ENCODE measurements at regions of chr19 and their contacts with region 1.

Region 1: GRCh38 chr19:41462497-41462896 is 19.5 kb downstream of the ERICH4 start:
- DNase-seq: no peak
- H3K4me3 ChIP-seq: no peak overlapping the region
- H3K27ac ChIP-seq: no peak overlapping the region
- H3K4me1 ChIP-seq: no peaks in the 10 kb centered on the region
- H3K27me3 ChIP-seq: no peaks in the 10 kb centered on the region
- CTCF ChIP-seq: no peak
- POLR2A ChIP-seq: no peak

Region 2: DNA sequence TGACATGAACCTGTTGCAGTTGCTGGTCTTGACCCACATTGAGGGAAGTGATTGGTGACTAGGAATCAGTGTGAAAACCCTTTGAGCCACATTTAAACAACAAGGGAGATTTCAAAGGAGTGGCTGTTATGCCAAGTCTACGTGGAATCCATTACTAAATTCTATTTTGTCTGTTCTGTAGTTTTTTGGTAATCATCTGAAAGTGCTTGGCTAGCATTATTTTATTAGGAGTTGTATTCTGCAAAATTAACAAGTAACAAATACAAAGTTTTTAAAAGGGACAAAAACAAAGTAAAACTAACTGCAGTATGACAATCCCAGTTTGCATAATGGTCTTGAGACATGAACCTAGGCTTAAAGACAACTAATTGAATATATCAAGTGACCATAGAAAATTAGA is 1357.7 kb before region 1 on chr19:
- intact Hi-C with region 1: loop called (anchors 5 kb)
- DNase-seq: no peak
- H3K4me3 ChIP-seq: no peak overlapping the region
- H3K27ac ChIP-seq: no peak overlapping the region
- H3K4me1 ChIP-seq: no peaks in the 10 kb centered on the region
- H3K27me3 ChIP-seq: no peaks in the 10 kb centered on the region
- CTCF ChIP-seq: no peak
- POLR2A ChIP-seq: no peak

Region 3: DNA sequence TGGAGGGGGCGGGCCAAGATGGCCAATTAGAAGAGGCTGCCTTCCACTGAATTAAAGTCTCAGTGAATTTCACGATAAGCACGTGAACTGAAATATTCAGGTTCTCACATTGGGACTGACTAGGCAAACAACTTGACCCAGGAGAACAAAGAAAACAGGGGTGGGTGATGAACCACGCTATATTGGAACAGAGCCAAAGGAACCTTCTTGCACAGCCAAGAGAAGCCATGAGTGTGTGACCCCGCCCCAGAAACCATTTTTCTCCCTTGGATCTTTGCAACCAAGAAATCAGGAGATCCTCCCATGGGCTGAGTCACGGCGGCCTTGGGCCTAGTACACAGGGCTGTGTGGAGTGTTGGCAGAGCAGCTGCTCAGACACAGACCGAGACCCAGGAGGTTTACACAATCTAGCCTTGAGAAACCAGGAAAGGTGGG is 17.3 kb after region 1 on chr19:
- intact Hi-C with region 1: no loop called
- DNase-seq: no peak
- H3K4me3 ChIP-seq: no peak overlapping the region
- H3K27ac ChIP-seq: peak overlapping the region; percentile 9
- H3K4me1 ChIP-seq: no peaks in the 10 kb centered on the region
- H3K27me3 ChIP-seq: no peaks in the 10 kb centered on the region
- CTCF ChIP-seq: no peak
- POLR2A ChIP-seq: no peak

Region 4: DNA sequence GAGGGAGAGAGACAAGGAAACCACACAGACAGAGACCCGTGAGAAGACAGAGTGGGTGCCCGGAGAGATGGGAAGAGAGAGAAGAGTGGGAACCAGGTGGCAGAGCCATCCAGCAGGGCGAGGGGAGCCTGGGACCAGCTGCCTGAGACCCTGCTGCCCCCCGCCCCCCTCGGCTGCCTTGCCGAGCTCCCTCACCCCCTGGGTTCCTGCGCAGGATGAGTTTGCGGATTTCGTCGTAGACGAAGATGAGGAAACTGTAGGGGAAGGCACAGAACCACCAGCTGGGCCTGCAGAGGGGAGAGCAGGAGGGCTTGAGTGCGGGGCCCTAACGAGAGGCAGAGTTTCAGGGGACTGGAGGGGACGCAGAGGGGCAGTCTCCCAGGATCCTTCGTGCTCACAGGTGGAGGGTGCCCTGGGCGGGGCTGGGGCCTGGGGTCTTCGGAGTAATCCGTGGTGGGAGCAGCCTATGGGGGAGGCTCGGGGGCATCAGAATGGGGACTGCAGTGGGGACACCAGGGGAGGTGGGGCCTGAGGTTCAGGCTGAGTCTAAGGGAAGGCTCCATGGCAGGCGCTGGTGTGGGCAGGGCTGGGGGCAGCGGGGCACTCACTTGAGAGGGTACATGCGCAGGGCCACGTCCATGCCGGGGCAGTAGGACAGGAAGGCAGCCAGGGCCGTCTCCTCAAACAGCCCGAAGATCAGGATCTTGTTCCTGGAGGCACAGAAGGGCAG is 504.7 kb after region 1 on chr19:
- intact Hi-C with region 1: no loop called
- DNase-seq: no peak
- H3K4me3 ChIP-seq: no peak overlapping the region
- H3K27ac ChIP-seq: no peak overlapping the region
- H3K4me1 ChIP-seq: no peaks in the 10 kb centered on the region
- H3K27me3 ChIP-seq: no peaks in the 10 kb centered on the region
- CTCF ChIP-seq: no peak
- POLR2A ChIP-seq: no peak